ENCODE measurements at regions of chr21 and their contacts with region 1.

Region 1: DNA sequence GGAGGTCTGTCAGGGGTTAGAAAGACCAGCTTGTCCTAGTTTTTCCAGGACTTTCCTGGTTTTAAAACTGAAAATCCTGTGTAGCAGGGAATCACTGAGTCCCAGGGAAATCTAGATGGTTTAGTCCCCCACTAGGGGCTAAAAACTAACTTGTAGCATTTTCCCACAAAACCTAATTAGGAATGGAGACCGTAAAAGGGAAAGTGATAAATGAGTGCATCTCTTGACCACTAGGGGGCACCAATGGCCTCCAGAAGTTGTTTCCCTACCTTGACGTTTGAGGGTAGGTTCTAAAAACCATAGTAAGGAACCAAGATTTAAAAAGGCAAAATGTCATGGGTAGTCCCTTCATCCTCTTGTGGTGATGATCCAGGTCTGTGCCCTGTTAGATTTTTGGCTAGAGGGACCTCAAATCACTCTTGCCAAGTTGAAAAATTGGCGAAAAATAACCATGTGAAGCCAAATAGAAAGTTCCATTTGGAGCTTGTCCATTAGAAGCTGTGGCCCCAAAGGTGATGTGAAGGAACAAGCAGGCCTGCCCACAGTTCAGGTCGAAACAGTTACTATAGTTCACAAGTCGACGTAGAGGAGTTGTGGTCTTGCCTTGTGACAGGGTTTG is 24.5 kb downstream of the CLIC6 start:
- DNase-seq: peak; percentile 23
- H3K4me3 ChIP-seq: no peak overlapping the region
- CTCF ChIP-seq: peak; percentile 74

Region 2: GRCh38 chr21:34498623-34499022 is 194.7 kb before region 1 on chr21:
- CTCF ChIA-PET with region 1: no interaction called
- POLR2A ChIA-PET with region 1: no interaction called
- DNase-seq: no peak
- H3K4me3 ChIP-seq: no peak overlapping the region
- CTCF ChIP-seq: no peak

Region 3: DNA sequence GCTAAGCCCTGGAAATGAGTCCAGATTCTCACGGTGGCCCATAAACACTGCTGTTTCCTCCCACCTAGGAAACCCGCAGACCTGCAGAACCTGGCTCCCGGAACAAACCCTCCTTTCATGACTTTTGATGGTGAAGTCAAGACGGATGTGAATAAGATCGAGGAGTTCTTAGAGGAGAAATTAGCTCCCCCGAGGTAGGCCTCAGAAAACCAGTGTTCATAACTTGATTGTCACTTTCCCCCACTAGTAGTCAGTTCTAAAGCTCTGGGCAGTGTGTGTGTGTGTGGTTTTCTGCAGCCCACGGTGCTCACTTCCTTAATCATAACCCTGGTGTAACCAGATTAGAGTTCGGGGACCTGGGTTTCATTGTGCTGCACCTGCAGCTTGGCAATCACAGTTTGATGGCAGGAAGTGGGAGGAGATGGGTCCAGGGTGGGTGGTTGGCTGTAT is 14.6 kb after region 1 on chr21:
- CTCF ChIA-PET with region 1: interaction called, 47 read pairs
- POLR2A ChIA-PET with region 1: no interaction called
- DNase-seq: no peak
- H3K4me3 ChIP-seq: no peak overlapping the region
- CTCF ChIP-seq: no peak

Region 4: GRCh38 chr21:34726627-34727337 is 33.5 kb after region 1 on chr21:
- CTCF ChIA-PET with region 1: interaction called, 11 read pairs
- POLR2A ChIA-PET with region 1: no interaction called
- DNase-seq: no peak
- H3K4me3 ChIP-seq: no peak overlapping the region
- CTCF ChIP-seq: no peak

Region 5: DNA sequence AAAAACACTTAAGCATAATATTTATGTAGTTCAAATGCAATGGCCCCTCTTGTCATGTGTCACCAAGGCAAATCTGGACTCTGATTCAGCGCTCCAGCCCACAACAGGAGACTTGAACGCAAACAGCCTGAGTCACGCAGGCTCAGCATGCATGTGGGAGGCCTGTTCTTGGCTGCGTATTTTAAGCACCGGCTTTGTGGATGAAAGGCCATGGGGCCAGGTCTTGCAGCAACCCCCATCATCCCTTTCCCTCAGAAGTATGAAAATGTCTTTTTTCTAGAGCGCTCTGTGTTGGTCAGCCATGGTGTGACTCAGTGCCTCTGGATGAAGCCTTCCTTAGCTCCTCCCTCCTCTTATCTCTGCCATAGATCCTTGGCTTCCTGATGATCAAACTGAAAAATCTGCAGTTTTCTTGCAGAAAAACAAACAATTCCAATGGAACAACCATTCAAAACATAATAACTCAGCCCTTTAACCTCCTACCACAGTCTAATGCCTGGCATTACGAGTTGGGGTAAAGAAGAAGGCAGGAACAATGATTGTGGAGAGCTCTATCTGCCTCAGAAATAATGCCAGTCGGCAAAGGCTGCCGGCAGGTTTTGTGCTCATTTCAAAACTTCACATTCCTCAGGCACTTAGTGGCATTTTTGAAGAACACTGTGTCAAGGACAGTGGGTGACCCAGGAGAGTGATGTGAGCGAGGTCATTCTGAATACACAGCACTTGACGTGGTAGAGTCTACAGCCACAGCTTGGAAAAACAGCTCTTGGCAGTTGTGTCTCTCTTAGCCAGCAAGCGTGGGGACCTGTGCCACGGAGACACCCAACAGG is 143.0 kb after region 1 on chr21:
- CTCF ChIA-PET with region 1: interaction called, 10 read pairs
- POLR2A ChIA-PET with region 1: no interaction called
- DNase-seq: peak; percentile 98
- H3K4me3 ChIP-seq: peak overlapping the region; percentile 29
- CTCF ChIP-seq: no peak

Region 6: DNA sequence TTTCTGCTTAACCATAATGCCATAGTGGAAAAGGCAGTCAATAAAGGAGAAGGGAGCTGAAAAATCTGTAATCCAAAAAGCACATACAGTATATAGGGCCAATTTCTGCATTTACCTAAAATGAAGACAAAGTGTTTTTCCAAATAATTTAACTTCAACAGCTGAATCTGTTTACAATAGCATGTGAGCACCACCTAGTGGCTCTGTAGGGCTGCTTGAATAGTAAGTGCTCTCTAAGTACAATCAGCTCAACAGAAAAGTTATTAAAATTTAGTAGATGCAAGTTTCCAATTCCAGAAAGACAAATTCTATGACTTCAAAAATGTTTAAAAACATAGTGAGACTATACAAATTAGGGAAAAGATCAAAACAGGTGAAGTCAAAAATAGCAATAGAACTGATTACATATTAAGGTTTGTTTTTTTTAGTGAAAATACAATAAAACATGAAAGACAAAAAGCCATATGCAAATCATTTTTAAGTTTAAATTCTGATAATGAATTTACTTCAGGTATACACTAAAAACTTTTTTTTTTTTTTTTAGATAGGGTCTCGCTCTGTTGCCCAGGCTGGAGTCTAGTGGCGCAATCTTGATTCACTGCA is 1147.0 kb after region 1 on chr21:
- CTCF ChIA-PET with region 1: interaction called, 12 read pairs
- POLR2A ChIA-PET with region 1: no interaction called
- DNase-seq: peak; percentile 65
- H3K4me3 ChIP-seq: no peak overlapping the region
- CTCF ChIP-seq: peak; percentile 71

Region 7: GRCh38 chr21:35940074-35940927 is 1247.0 kb after region 1 on chr21:
- CTCF ChIA-PET with region 1: interaction called, 15 read pairs
- POLR2A ChIA-PET with region 1: no interaction called
- DNase-seq: peak; percentile 28
- H3K4me3 ChIP-seq: no peak overlapping the region
- CTCF ChIP-seq: peak; percentile 69

Region 8: GRCh38 chr21:36028127-36029069 is 1335.1 kb after region 1 on chr21:
- CTCF ChIA-PET with region 1: interaction called, 23 read pairs
- POLR2A ChIA-PET with region 1: no interaction called
- DNase-seq: no peak
- H3K4me3 ChIP-seq: peak overlapping the region; percentile 12; the same call in 1 of the 2 replicates
- CTCF ChIP-seq: peak; percentile 91